ENCODE measurements at regions of chr1 and their contacts with region 1.

Region 1: GRCh38 chr1:155172732-155173477 is at the start of gene KRTCAP2:
- DNase-seq: peak; percentile 94 to 96
- H3K4me3 ChIP-seq: peak within 1 kb of the TSS; percentile 67
- H3K4me3 Mint-ChIP-seq: peak within 1 kb of the TSS; percentile 98
- H3K27ac Mint-ChIP-seq: peak within 1 kb of the TSS; percentile 91
- H3K4me1 ChIP-seq: peaks cover 16% of the 10 kb centered on the region; the same call in 1 of the 2 replicates
- H3K4me1 Mint-ChIP-seq: peaks cover 11% of the 10 kb centered on the region
- H3K27me3 ChIP-seq: no peaks in the 10 kb centered on the region
- H3K27me3 Mint-ChIP-seq: no peaks in the 10 kb centered on the region
- CTCF ChIP-seq: peak; percentile 81 to 93
- total RNA-seq, gene KRTCAP2: 215 and 219 TPM in 2 replicates

Region 2: GRCh38 chr1:155050560-155051341 is 122.2 kb before region 1 on chr1 and contains the start of gene ADAM15:
- CTCF ChIA-PET with region 1: interaction called, 10 read pairs
- POLR2A ChIA-PET with region 1: no interaction called
- intact Hi-C with region 1: loop called (anchors 1 kb)
- DNase-seq: peak; percentile 80 to 90
- H3K4me3 ChIP-seq: peak within 1 kb of the TSS; percentile 61
- H3K4me3 Mint-ChIP-seq: peak within 1 kb of the TSS; percentile 88
- H3K27ac Mint-ChIP-seq: peak within 1 kb of the TSS; percentile 86
- H3K4me1 ChIP-seq: peaks cover 20% of the 10 kb centered on the region
- H3K4me1 Mint-ChIP-seq: peaks cover 19% of the 10 kb centered on the region
- H3K27me3 ChIP-seq: no peaks in the 10 kb centered on the region
- H3K27me3 Mint-ChIP-seq: no peaks in the 10 kb centered on the region
- CTCF ChIP-seq: peak; percentile 86 to 90
- total RNA-seq, gene ADAM15: 44.0 and 48.2 TPM in 2 replicates

Region 3: GRCh38 chr1:155091071-155091709 is 81.7 kb before region 1 on chr1:
- CTCF ChIA-PET with region 1: interaction called, 147 read pairs
- POLR2A ChIA-PET with region 1: interaction called, 7 read pairs
- intact Hi-C with region 1: no loop called
- DNase-seq: peak; percentile 85 to 91
- H3K4me3 ChIP-seq: no peak overlapping the region
- H3K4me3 Mint-ChIP-seq: peak overlapping the region; percentile 47
- H3K27ac Mint-ChIP-seq: no peak overlapping the region
- H3K4me1 ChIP-seq: peaks cover 10% of the 10 kb centered on the region
- H3K4me1 Mint-ChIP-seq: peaks cover 6% of the 10 kb centered on the region
- H3K27me3 ChIP-seq: no peaks in the 10 kb centered on the region
- H3K27me3 Mint-ChIP-seq: no peaks in the 10 kb centered on the region
- CTCF ChIP-seq: peak; percentile 95 to 96

Region 4: GRCh38 chr1:155099331-155099730 is 73.6 kb before region 1 on chr1:
- CTCF ChIA-PET with region 1: interaction called, 12 read pairs
- POLR2A ChIA-PET with region 1: no interaction called
- intact Hi-C with region 1: no loop called
- DNase-seq: no peak
- H3K4me3 ChIP-seq: no peak overlapping the region
- H3K4me3 Mint-ChIP-seq: no peak overlapping the region
- H3K27ac Mint-ChIP-seq: no peak overlapping the region
- H3K4me1 ChIP-seq: no peaks in the 10 kb centered on the region
- H3K4me1 Mint-ChIP-seq: no peaks in the 10 kb centered on the region
- H3K27me3 ChIP-seq: no peaks in the 10 kb centered on the region
- H3K27me3 Mint-ChIP-seq: no peaks in the 10 kb centered on the region
- CTCF ChIP-seq: no peak

Region 5: DNA sequence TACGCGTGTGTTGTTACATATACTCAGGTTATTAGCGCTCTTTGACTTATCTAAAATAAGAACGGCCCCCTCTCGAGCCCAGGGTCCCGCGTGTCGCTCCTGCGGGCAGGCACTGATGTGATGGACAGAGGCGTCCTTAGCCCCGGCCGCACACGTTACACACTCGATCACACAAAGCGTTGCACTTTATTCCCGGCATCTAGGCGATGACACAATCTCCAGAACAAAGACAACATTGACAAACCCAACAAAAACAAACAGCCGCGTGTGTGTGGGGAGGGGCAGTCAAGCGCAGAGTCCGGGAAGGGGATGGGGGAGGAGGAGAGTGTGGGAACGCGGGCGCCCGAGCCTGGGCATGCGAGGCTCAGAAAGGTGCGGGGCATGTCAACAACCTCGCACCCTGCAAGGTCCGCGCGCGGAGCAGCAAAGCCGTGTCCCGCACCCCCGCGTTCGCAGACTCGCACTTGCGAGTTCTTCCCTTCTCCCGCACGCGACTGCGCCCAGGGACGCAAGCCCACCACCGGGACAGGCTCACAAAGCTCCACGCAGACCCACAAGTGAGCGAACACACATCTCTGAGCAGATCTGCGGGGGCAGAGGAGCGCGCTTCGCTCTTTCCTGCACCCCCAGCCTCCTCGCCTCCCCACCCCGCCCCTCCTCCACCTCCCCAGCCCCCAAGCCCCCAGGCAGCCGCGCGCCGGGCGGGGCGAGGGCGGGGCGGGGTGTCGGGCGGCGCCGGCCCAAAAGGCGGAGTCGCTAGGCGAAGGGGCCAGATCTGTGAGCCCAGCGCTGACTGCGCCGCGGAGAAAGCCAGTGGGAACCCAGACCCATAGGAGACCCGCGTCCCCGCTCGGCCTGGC is 45.6 kb before region 1 on chr1 and contains the start of gene EFNA1:
- CTCF ChIA-PET with region 1: interaction called, 16 read pairs
- POLR2A ChIA-PET with region 1: interaction called, 4 read pairs
- intact Hi-C with region 1: no loop called
- DNase-seq: peak; percentile 82
- H3K4me3 ChIP-seq: peak within 1 kb of the TSS; percentile 68
- H3K4me3 Mint-ChIP-seq: peak within 1 kb of the TSS; percentile 89
- H3K27ac Mint-ChIP-seq: peak within 1 kb of the TSS; percentile 80
- H3K4me1 ChIP-seq: peaks cover 53% of the 10 kb centered on the region
- H3K4me1 Mint-ChIP-seq: peaks cover 42% of the 10 kb centered on the region
- H3K27me3 ChIP-seq: no peaks in the 10 kb centered on the region
- H3K27me3 Mint-ChIP-seq: no peaks in the 10 kb centered on the region
- CTCF ChIP-seq: no peak
- total RNA-seq, gene EFNA1: 42.5 and 47.9 TPM in 2 replicates

Region 6: DNA sequence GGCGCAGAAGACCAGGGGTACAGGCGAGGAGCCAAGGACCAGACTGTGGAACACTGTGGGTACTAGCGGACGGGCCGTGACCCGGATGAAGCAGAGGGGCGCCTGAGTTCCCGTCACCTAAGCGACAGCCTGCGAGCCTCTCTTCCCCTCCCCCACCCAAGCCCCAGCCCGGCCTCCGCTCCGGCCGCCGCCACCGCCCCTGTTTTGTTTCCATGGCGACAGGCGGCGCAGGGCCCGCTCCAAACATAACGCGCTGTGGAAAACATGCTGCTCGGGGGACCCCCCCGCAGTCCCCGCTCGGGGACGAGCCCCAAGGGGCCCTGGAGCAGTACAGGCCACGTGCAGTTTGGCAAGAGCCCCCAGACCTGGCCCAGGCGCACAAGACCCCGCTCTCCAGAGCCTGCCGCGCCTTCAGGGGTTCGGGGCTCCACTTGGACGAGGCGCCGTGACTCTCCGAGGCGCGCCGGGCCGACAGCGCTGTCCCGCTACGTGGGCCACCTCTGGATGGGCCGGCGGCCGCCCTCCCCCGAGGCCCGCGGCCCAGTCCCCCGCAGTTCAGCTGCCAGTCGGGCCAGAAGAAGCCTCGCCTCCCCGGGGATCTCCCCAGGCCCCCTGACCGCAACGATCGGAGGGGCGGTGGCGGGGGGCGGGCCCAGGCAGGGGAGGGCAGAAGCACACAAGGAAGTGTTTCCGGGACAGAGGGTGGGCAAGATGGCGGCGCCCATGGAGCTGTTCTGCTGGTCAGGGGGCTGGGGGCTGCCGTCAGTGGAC is 35.8 kb after region 1 on chr1 and contains the start of gene MTX1:
- CTCF ChIA-PET with region 1: interaction called, 10 read pairs
- POLR2A ChIA-PET with region 1: interaction called, 4 read pairs
- intact Hi-C with region 1: no loop called
- DNase-seq: peak; percentile 86
- H3K4me3 ChIP-seq: peak within 1 kb of the TSS; percentile 91
- H3K4me3 Mint-ChIP-seq: peak within 1 kb of the TSS; percentile 80
- H3K27ac Mint-ChIP-seq: peak within 1 kb of the TSS; percentile 93
- H3K4me1 ChIP-seq: peaks cover 15% of the 10 kb centered on the region
- H3K4me1 Mint-ChIP-seq: peaks cover 16% of the 10 kb centered on the region
- H3K27me3 ChIP-seq: no peaks in the 10 kb centered on the region
- H3K27me3 Mint-ChIP-seq: no peaks in the 10 kb centered on the region
- CTCF ChIP-seq: no peak
- total RNA-seq, gene MTX1: 64.9 and 65.3 TPM in 2 replicates

Region 7: DNA sequence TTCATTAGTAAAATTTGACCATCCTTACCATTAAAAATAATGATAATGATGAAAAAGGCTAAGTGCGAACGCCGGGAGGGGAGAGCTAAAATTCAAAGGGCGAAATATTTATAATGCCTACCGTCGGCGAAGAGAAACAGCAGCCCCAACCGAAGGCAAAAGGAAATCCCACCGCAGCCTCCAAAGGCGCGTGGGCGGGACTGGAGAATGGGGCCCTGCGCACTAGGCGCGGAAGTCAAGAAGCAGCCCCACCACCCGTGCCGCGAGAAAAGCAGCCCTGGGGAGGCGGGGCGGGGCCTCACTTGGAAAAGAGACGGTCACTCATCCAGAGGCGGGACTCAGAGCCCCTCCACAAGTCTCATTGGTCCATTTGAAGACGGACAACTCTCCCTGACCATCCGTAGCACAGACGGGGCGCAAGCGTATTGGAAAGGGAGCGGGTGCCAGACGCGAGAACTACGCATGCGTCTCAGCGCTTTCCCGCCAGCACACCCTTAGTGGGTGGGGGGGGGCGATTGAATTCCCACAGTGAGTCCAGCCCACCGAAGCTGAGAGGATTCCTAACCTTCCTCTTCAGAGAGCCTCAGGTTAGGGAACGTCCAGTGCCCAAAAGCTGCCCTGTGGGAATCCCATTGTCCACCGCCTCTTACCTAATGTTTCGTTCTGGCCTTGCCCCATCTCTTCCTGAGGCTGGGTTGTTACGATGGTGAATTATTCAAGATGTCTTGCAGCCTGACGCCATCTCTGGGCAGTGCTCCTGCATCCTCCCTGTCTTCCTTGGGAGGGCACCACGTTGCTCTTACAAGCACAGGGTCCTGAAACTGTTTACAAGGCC is 54.6 kb after region 1 on chr1:
- CTCF ChIA-PET with region 1: interaction called, 6 read pairs
- POLR2A ChIA-PET with region 1: no interaction called
- intact Hi-C with region 1: loop called (anchors 1 kb)
- DNase-seq: peak; percentile 99
- H3K4me3 ChIP-seq: peak overlapping the region; percentile 62
- H3K4me3 Mint-ChIP-seq: peak overlapping the region; percentile 81
- H3K27ac Mint-ChIP-seq: peak overlapping the region; percentile 80
- H3K4me1 ChIP-seq: peaks cover 22% of the 10 kb centered on the region
- H3K4me1 Mint-ChIP-seq: peaks cover 25% of the 10 kb centered on the region
- H3K27me3 ChIP-seq: no peaks in the 10 kb centered on the region
- H3K27me3 Mint-ChIP-seq: no peaks in the 10 kb centered on the region
- CTCF ChIP-seq: no peak